ENCODE measurements at regions of chr1 and their contacts with region 1.

Region 1: DNA sequence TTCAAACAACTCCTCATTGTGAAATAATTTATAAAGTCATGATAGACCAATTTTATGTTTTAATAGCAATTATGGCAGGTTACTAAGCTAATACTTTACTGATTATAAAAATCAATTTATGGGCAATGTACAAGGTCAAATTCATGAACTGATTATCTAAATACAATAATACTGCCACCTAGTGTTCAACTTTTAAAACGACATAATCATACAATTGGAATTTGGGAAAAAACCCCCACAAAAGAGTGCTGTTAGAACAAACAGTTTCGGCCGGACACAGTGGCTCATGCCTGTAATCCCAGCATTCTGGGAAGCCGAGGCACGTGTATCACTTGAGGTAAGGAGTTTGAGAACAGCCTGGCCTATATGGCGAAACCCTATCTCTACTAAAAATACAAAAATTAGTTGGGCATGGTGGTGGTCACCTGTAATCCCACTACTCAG is 14.0 kb downstream of the GTF2B start:
- DNase-seq: no peak
- H3K4me3 Mint-ChIP-seq: no peak overlapping the region
- H3K27ac Mint-ChIP-seq: no peak overlapping the region
- H3K4me1 Mint-ChIP-seq: peaks cover 43% of the 10 kb centered on the region
- H3K27me3 Mint-ChIP-seq: no peaks in the 10 kb centered on the region

Region 2: GRCh38 chr1:88608139-88608943 is 269.1 kb before region 1 on chr1:
- CTCF ChIA-PET with region 1: interaction called, 3 read pairs
- intact Hi-C with region 1: loop called (anchors 1 kb)
- DNase-seq: no peak
- H3K4me3 Mint-ChIP-seq: no peak overlapping the region
- H3K27ac Mint-ChIP-seq: no peak overlapping the region
- H3K4me1 Mint-ChIP-seq: no peaks in the 10 kb centered on the region
- H3K27me3 Mint-ChIP-seq: no peaks in the 10 kb centered on the region

Region 3: GRCh38 chr1:88736639-88737248 is 140.7 kb before region 1 on chr1:
- CTCF ChIA-PET with region 1: interaction called, 15 read pairs
- intact Hi-C with region 1: loop called (anchors 1 kb)
- DNase-seq: peak; percentile 45
- H3K4me3 Mint-ChIP-seq: no peak overlapping the region
- H3K27ac Mint-ChIP-seq: no peak overlapping the region
- H3K4me1 Mint-ChIP-seq: peaks cover 9% of the 10 kb centered on the region
- H3K27me3 Mint-ChIP-seq: no peaks in the 10 kb centered on the region

Region 4: DNA sequence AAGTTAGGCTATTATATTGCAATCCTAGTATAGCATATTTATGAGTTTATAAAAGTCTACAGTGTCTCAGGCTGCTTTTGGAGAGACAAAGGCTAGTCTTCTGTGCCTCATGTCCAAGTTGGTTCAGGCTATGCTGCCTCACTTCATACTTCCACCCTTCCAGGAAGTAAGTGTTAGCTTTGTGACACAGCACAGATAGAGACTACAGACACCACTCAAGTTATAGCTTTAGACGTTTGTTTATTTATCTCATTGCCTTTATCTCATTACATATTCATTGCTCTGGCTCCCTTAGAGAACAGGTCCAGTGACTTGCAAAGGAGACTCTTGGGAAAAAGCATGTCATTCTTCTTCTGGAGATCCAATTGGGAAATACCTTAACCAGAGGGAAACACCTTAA is 343.9 kb after region 1 on chr1:
- CTCF ChIA-PET with region 1: no interaction called
- intact Hi-C with region 1: no loop called
- DNase-seq: no peak
- H3K4me3 Mint-ChIP-seq: no peak overlapping the region
- H3K27ac Mint-ChIP-seq: no peak overlapping the region
- H3K4me1 Mint-ChIP-seq: peaks cover 4% of the 10 kb centered on the region
- H3K27me3 Mint-ChIP-seq: no peaks in the 10 kb centered on the region